Heart left ventricle (tissue), 16 donors: ENCODE measurements at regions of chr7 and their contacts with region 1.

Region 1: DNA sequence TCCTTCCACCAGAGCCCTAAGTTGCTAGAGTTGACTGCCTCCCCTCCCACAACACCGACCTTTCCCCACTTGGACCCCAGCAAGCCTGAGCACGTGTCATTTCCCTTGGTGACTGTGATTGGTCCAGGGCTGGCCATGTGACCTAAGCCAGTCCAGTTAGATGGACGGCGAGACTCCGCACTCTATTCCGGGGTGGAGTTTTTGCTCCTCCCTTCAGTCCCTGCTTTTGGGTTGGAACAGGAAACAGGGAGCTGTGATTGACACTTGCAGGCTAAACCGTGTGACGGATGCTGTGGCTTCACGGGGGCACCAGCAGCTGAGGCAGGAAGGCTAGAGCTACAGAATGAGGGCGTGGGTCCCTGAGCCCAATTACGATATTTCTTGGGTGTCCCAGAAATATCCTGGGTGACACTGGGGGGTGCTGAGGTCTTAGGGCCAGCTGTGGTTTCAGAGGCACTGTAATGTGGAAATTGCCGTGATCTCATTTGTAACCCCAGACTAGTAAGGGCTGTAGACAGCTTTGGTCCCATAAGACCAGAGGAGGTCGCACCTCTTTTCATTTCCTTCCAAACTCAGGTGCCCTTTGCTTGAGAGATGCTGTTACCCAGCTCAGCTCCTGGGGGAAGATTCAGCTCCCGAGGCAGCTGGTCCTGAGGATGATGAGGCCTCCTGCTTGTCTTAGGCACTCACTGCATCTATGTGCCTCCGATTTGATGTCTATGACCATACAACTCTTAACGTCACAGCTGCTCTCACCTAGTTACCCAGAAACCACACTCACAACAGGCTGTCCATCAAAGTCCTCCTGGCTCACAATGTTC is 102.7 kb upstream of the NPTX2 start:
- DNase-seq: no peak
- ATAC-seq: no peak
- H3K4me3 ChIP-seq: no peak overlapping the region
- H3K27ac ChIP-seq: no peak overlapping the region
- H3K4me1 ChIP-seq: no peaks in the 10 kb centered on the region
- H3K27me3 ChIP-seq: peaks cover 0 to 4% (median 0%) of the 10 kb centered on the region in 9 donors
- CTCF ChIP-seq: no peak
- POLR2A ChIP-seq: no peak

Region 2: DNA sequence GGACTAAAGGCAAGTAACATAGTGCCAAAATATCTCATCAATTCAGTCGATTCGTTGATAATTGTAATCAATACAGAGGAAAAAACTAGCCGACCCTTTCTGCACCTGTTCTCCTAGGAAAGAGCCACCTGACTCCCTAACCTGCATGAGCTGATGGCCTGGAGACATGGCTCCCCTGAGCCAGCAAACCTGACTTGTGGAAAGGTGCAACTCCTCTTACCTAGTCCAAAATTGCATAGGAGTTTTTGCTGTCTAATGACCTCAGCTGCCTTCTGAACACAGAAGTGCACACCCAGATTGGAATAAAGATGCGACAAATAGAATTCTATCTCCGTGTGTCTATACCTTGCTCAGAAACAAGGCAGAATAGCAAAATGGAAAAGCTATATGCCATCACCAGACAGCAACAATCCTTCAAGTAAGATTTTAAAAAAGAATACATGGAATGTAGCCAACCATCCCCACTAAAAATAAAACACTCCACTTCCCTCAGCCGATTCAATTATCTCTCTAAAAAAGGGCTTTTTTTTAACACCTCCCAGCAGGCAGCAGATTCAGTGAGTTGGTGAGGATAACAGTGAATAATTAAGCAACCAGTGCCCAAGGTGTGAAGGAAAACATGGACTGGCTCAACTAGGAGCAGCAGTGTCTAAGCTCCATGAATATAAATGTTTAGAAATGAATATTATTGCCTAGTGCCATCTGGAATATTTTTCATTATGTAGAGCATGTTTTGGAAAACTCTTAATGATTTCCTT is 434.4 kb before region 1 on chr7:
- intact Hi-C with region 1: loop called in 1 of 10 experiments (anchors 10 kb)
- DNase-seq: no peak
- ATAC-seq: no peak
- H3K4me3 ChIP-seq: no peak overlapping the region
- H3K27ac ChIP-seq: no peak overlapping the region
- H3K4me1 ChIP-seq: no peaks in the 10 kb centered on the region
- H3K27me3 ChIP-seq: no peaks in the 10 kb centered on the region
- CTCF ChIP-seq: no peak
- POLR2A ChIP-seq: no peak

Region 3: DNA sequence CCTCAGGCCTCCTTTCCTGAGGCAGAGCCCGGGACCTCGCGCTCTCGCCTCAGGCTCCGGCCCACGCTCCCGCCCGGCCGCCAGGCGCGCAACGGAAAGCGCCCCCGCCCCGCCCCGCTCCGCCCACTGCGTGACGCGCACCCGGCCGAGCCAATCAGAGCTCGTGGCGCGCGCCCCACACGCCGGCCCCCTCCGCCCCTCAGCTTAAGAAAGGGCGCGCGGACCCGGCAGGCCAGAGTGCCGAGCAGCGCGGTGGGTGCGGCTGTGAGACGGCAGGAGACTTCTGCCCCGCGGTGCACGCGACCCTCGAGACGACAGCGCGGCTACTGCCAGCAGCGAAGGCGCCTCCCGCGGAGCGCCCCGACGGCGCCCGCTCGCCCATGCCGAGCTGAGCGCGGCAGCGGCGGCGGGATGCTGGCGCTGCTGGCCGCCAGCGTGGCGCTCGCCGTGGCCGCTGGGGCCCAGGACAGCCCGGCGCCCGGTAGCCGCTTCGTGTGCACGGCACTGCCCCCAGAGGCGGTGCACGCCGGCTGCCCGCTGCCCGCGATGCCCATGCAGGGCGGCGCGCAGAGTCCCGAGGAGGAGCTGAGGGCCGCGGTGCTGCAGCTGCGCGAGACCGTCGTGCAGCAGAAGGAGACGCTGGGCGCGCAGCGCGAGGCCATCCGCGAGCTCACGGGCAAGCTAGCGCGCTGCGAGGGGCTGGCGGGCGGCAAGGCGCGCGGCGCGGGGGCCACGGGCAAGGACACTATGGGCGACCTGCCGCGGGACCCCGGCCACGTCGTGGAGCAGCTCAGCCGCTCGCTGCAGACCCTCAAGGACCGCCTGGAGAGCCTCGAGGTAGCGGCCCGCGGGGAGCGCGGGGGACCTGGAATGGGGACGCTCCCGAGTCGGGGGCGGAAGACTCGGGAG is 102.9 kb after region 1 on chr7 and contains the start of gene NPTX2:
- intact Hi-C with region 1: no loop called
- DNase-seq: peak; percentile 25 to 77 (median 48)
- ATAC-seq: peak in 3 of 4 donors; percentile 67 to 83 (median 76)
- H3K4me3 ChIP-seq: peak within 1 kb of the TSS in 11 of 12 donors; percentile 10 to 50 (median 35)
- H3K27ac ChIP-seq: no peak within 1 kb of the TSS
- H3K4me1 ChIP-seq: peaks cover 0 to 28% (median 3%) of the 10 kb centered on the region in 12 donors
- H3K27me3 ChIP-seq: peaks cover 16 to 64% (median 28%) of the 10 kb centered on the region in 9 donors
- CTCF ChIP-seq: peak in 6 of 12 donors; percentile 14 to 42 (median 23)
- POLR2A ChIP-seq: peak in 1 of 2 donors; percentile 62
- total RNA-seq, gene NPTX2: 0.21 to 32.0 (median 2.7) TPM